ENCODE measurements at regions of chr5 and their contacts with region 1.

Region 1: DNA sequence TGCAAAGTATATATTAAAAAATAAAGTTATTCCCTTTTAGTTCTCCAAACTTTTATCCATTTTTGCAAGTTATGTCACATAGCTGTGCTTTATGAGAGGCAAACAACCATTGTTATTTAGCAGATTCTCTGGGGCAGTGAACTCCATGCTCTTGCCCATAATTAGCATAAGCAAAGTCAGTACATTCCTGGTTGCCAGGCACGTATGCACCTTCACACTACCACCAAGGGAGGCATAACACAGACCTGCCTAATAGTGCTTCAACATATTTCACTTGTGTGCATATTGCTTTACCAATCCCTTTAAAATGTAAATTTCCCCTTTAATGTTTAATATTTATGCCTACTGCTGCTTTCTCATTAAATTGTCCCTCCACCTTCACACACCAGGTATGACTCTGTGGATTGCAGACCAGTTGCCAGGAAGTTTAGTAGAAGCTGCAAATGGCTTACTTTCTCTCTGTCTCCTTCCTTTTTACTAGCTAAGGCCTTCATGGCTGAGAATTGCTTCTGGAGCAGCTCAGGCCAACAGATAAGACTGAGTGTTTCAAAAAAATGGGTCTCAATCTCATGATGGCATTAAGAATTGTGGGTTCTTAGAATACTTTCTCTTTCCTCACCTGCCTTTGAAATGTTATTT is 388.2 kb downstream of the PRR16 start:
- DNase-seq: no peak
- H3K4me3 ChIP-seq: 0 out of 8 replicates have a peak overlapping the region, but pooled peaks of 1 of the 4 experiments have one; percentile 15
- H3K27ac ChIP-seq: no peak overlapping the region
- H3K4me1 ChIP-seq: peaks cover 2 to 20% (median 13%) of the 10 kb centered on the region in 4 experiments; a peak in 6 of 7 replicates
- H3K27me3 ChIP-seq: 0 out of 7 replicates have a peak, but pooled peaks cover 0 to 5% (median 2%) of the 10 kb centered on the region in 4 experiments
- CTCF ChIP-seq: no peak
- EP300 ChIP-seq: no peak
- POLR2A ChIP-seq: no peak
- RAD21 ChIP-seq: no peak

Region 2: DNA sequence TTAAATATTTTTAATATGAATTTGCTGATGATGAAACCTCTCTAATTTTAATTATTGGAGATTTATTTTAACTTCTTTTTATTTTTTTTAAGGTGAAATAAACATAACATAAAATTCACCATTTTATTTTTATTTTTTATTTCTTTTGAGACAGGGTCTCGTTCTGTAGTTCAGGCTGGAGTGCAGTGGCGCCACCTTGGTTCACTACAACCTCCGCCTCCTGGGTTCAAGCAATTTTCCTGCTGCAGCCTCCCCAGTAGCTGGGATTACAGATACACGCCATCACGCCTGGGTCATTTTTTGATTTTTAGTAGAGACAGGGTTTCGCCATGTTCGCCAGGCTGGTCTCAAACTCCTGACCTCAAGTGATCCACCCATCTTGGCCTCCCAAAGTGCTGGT is 14.7 kb after region 1 on chr5:
- CTCF ChIA-PET with region 1: interaction called, 14 read pairs
- POLR2A ChIA-PET with region 1: interaction called, 3 read pairs
- DNase-seq: no peak
- H3K4me3 ChIP-seq: no peak overlapping the region
- H3K27ac ChIP-seq: no peak overlapping the region; the same call in 1 of the 2 replicates
- H3K4me1 ChIP-seq: peaks cover 0 to 9% (median 1%) of the 10 kb centered on the region in 4 experiments; a peak in 5 of 7 replicates
- H3K27me3 ChIP-seq: no peaks in the 10 kb centered on the region
- CTCF ChIP-seq: peak; percentile 29 to 51 (median 42)
- EP300 ChIP-seq: no peak
- POLR2A ChIP-seq: no peak
- RAD21 ChIP-seq: peak; percentile 28 to 51; a peak in 3 of 4 replicates

Measured in H1 (cell line).